ENCODE measurements at regions of chr5 and their contacts with region 1.

Region 1: DNA sequence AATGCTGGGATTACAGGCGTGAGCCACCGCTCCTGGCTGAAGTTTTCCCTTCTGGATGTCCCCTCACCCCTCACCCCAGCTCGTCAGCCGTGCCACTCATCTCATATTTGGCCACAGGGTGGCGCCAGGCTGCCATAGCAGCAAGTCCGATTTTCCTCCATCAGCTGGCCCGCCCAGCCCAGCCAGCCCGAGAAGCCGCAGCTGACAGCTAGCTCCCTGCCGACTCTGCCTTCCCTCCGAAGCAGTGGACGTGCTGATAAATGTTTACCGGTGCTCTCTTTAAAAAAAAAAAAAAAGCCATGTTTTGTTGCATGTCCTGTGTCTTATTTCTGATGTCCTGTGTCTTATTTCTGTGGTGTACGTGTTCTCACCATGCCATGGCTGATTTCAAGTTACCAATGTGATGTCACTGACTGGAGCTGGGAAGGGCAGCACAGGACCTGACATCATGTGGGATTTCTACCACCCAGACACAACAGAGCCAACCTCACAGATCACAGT is 58.3 kb downstream of the PFDN1 start:
- DNase-seq: peak; percentile 91
- H3K4me3 ChIP-seq: no peak overlapping the region
- H3K27ac ChIP-seq: no peak overlapping the region
- H3K4me1 ChIP-seq: peaks cover 16% of the 10 kb centered on the region
- H3K27me3 ChIP-seq: no peaks in the 10 kb centered on the region
- CTCF ChIP-seq: peak; percentile 69

Region 2: DNA sequence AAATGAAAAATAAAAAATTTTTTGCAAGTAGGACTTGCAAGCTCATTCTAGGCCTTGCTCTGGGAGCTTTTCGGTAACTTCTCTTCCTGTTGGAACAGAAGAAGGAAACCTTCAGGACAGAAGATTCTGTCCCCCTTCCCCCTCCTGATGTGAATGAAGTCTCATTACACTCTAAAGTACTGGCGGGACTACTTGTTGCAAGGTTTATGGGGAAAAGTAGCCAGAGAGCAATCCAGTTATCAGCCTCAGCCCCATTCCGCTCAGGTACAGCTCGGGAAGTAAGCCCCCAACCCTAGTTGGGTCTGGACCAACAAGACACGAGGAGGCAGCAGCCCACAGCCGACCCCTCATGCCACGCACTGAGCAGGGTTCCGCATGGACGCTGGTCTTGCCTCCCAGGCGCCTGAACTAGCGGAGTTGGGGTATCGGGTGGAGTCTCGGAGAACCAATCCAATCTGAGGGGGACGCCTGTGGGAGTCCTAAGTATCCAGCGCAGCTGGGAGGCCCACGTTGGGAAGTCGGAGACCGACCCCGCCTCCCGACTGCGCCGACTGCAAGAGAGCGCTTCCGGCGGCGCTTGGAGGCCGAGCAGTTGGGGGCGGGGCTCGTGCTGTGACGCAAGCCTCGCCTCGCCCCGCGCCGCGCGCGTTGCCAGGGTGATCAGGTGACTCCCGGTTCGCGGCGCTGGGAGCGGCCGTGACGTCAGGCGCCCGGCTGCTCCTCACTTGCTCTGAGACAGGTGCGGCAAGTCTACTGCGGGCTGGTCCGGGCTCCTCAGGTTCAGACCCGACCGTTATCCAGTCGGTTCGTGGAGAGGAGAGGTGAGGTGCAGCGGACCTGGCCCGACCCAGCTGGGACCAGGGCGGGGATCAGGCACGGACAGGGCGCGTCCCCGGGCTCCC is 69.9 kb before region 1 on chr5 and contains the start of gene CYSTM1:
- intact Hi-C with region 1: loop called (anchors 5 kb)
- DNase-seq: peak; percentile 98
- H3K4me3 ChIP-seq: peak within 1 kb of the TSS; percentile 82
- H3K27ac ChIP-seq: peak within 1 kb of the TSS; percentile 97
- H3K4me1 ChIP-seq: no peaks in the 10 kb centered on the region
- H3K27me3 ChIP-seq: no peaks in the 10 kb centered on the region
- CTCF ChIP-seq: no peak
- total RNA-seq, gene CYSTM1: 205 TPM

Region 3: DNA sequence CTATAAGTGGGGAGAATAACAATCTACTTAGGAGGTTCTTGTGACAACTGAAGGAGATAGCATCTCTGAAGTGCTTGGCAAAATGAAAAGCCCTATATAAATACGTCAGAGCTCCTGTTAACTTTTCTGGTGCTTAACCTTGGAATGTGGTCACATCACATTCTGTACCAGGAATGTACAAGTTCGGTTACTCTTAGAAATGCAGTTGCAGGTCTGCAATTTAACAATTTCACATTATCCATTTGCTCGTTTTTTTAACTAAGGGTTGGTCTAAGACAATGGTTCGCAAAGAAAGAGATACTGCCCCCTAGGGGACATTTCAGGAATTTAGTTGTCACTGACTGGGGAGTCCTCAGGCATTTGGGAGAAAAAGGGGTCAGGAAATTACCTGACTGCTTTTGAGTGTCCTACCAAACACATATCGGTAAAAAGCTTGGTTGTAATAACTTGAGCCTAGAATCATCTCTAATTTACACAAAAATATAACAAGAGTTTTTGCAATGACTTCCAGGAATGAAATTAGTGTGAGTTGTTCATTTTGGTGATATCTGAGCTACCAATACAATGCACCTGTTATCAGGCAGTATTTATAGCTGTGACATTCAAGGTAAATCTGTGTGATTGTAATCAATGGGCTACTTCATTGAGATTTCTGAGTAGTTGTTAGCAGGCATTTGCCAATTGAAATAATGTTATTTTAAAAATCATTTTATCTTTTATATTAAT is 107.2 kb after region 1 on chr5:
- intact Hi-C with region 1: loop called (anchors 2 kb)
- DNase-seq: peak; percentile 87
- H3K4me3 ChIP-seq: no peak overlapping the region
- H3K27ac ChIP-seq: no peak overlapping the region
- H3K4me1 ChIP-seq: peaks cover 6% of the 10 kb centered on the region
- H3K27me3 ChIP-seq: no peaks in the 10 kb centered on the region
- CTCF ChIP-seq: peak; percentile 90

Region 4: GRCh38 chr5:140357726-140358093 is 113.1 kb after region 1 on chr5:
- intact Hi-C with region 1: loop called (anchors 2 kb)
- DNase-seq: peak; percentile 88
- H3K4me3 ChIP-seq: peak overlapping the region; percentile 5
- H3K27ac ChIP-seq: no peak overlapping the region
- H3K4me1 ChIP-seq: no peaks in the 10 kb centered on the region
- H3K27me3 ChIP-seq: no peaks in the 10 kb centered on the region
- CTCF ChIP-seq: peak; percentile 86